Activated CD8-positive, alpha-beta memory T cell treated with anti-CD3 and anti-CD28 coated beads, Interleukin-2, amount 10 ng/mL, durations not matched to agents 7 days and 5 days (primary cell): ENCODE measurements at regions of chr1 and their contacts with region 1.

Region 1: GRCh38 chr1:43946236-43947060 is at the start of gene IPO13:
- DNase-seq: peak; percentile 97
- ATAC-seq: peak; percentile 97
- H3K4me3 Mint-ChIP-seq: peak within 1 kb of the TSS; percentile 92
- H3K27ac Mint-ChIP-seq: peak within 1 kb of the TSS; percentile 91
- H3K4me1 Mint-ChIP-seq: peaks cover 35% of the 10 kb centered on the region
- H3K27me3 Mint-ChIP-seq: no peaks in the 10 kb centered on the region
- total RNA-seq, gene IPO13: 25.3 to 29.4 TPM

Region 2: DNA sequence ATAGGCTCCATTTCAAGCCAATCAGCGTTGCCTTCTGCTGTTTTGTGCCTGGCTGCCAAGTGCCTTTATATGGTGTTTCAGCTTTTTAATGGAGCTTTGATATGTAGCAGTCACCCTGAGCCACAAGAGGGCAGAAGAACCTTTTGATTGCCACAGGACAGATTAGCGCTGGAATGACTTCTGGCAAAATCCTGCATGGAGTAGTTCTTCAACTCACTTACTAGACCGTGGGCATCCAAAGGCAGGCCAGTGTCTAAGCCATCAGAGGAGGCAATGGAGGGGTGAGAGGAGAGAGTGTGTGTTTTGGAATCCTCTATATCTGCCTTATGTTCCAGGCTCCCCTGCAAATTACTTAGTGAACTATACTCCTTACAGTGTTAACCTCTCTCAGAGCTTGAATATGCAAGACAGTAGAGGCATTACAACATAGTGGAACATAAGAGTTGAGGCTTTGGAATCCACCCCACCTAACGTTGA is 182.9 kb before region 1 on chr1:
- CTCF ChIA-PET with region 1: interaction called, 26 read pairs
- DNase-seq: peak; percentile 57
- ATAC-seq: peak; percentile 85
- H3K4me3 Mint-ChIP-seq: no peak overlapping the region
- H3K27ac Mint-ChIP-seq: no peak overlapping the region
- H3K4me1 Mint-ChIP-seq: no peaks in the 10 kb centered on the region
- H3K27me3 Mint-ChIP-seq: no peaks in the 10 kb centered on the region

Region 3: DNA sequence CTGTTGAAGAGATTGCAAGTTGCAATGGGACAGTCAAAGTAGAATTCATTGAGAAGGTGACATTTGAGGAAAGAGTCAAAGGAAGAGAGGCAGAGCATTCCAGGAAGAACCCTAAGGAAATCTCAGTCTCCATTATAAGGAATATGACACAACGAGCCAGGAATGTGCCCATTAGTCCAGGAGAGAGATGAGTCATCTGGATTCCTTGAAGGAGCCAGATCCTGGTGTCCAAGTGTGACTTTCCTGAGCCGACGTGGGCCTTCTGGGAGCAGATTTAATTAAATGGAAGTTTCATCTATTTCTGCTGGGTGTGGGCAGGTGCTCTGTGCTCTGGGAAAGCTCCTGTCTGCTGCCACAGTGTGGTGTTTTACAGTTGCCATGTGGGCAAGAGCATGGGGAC is 124.4 kb before region 1 on chr1:
- CTCF ChIA-PET with region 1: no interaction called
- DNase-seq: no peak
- ATAC-seq: no peak
- H3K4me3 Mint-ChIP-seq: no peak overlapping the region
- H3K27ac Mint-ChIP-seq: no peak overlapping the region
- H3K4me1 Mint-ChIP-seq: peaks cover 5% of the 10 kb centered on the region
- H3K27me3 Mint-ChIP-seq: no peaks in the 10 kb centered on the region

Region 4: GRCh38 chr1:43974443-43975248 is 28.2 kb after region 1 on chr1 and contains the start of gene ATP6V0B:
- CTCF ChIA-PET with region 1: interaction called, 30 read pairs
- DNase-seq: peak; percentile 97
- ATAC-seq: peak; percentile 75
- H3K4me3 Mint-ChIP-seq: peak within 1 kb of the TSS; percentile 83
- H3K27ac Mint-ChIP-seq: peak within 1 kb of the TSS; percentile 90
- H3K4me1 Mint-ChIP-seq: peaks cover 56% of the 10 kb centered on the region
- H3K27me3 Mint-ChIP-seq: no peaks in the 10 kb centered on the region
- total RNA-seq, gene ATP6V0B: 108 to 139 TPM